SK-N-SH (cell line): ENCODE measurements at regions of chr2 and their contacts with region 1.

Region 1: DNA sequence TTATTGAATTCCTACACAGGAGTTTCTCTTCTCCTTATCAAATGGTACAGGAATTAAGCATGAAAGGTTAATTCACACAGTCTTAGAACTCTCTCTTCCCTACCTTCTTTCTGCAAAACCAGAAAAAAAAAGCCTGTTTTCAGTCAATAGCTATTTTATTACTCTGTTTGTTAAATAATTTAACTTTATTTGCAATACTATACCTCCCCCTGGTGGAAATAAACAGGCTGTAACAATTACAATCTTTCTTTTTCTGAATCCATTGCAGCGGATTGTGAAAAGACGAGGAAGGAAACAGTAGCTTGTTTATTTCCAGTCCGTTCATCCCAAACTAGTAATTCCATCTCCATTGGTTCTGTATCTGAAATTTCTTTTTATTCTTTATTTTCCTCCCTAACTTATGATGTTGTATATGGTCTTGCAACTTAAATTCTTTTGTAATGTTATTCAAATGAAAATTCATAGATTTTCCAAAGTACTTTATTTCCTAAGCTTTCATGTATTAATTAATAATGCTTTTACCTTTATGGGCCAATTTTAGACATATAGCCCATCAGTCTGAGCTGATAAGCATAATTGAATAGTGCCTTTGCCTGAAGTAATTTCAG is 165.2 kb downstream of the SH3BP4 start:
- DNase-seq: peak; percentile 51
- H3K4me3 ChIP-seq: no peak overlapping the region; a peak in 1 of 4 replicates
- H3K27ac ChIP-seq: no peak overlapping the region
- H3K4me1 ChIP-seq: no peaks in the 10 kb centered on the region
- H3K27me3 ChIP-seq: no peaks in the 10 kb centered on the region
- CTCF ChIP-seq: peak; percentile 83
- EP300 ChIP-seq: no peak
- RAD21 ChIP-seq: peak; percentile 87

Region 2: DNA sequence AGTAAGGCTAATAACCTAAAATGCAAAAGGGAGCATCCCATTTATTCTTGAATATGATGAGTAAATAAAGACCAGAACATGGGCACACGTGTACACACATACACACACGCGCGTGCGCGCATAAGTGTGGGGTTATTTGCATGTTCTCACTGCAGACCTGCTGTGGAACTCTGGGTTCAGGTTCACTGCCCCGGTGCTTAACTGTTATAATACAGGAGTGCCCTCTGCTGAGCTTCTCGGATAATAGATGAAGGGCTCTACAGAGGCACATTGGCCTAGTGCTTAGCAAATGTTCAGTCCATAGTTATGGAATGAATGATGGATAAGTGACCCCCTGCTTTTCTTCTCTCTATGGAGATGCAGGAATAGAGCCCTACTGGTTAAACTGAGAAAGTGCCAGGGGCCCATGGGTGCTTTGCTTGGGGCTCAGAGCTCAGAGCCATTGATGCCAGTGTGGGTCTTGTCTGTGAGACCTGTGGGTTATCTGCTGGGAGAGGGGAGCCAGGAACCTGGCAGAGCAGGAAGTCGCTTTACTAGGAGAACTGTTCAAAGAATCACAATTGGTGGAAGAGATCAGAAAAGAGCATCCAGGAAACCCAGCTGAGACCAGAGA is 616.5 kb before region 1 on chr2:
- CTCF ChIA-PET with region 1: interaction called, 14 read pairs
- POLR2A ChIA-PET with region 1: no interaction called
- DNase-seq: peak; percentile 61
- H3K4me3 ChIP-seq: no peak overlapping the region
- H3K27ac ChIP-seq: no peak overlapping the region
- H3K4me1 ChIP-seq: peaks cover 6 to 8% of the 10 kb centered on the region in 2 experiments; a peak in 2 of 4 replicates
- H3K27me3 ChIP-seq: no peaks in the 10 kb centered on the region
- CTCF ChIP-seq: peak; percentile 64
- EP300 ChIP-seq: no peak
- RAD21 ChIP-seq: peak; percentile 93

Region 3: GRCh38 chr2:234533626-234534025 is 583.4 kb before region 1 on chr2:
- CTCF ChIA-PET with region 1: interaction called, 10 read pairs
- POLR2A ChIA-PET with region 1: no interaction called
- DNase-seq: peak; percentile 63
- H3K4me3 ChIP-seq: no peak overlapping the region
- H3K27ac ChIP-seq: no peak overlapping the region; a peak in 1 of 4 replicates
- H3K4me1 ChIP-seq: peaks cover 0 to 36% of the 10 kb centered on the region in 2 experiments; a peak in 1 of 4 replicates
- H3K27me3 ChIP-seq: no peaks in the 10 kb centered on the region
- CTCF ChIP-seq: no peak
- EP300 ChIP-seq: no peak
- RAD21 ChIP-seq: no peak

Region 4: DNA sequence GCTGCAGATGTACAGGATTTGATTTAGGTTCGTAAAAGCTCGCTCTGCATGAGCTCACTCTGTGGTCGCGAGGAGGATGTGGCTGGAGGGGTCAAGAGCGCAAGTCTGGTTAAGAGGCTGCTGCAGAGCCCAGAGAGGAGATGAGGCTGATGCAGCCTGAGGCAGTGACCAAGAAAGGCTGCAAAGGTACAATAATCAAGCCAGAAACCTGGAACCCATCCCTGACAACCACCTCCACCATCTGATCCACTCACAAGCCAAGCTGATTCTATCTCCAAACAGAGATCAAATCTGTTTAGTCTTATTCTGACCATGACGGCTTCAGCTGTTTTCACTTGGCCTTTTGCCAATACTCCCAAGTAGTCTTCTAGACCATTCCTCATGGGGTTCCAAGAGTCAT is 561.3 kb before region 1 on chr2:
- CTCF ChIA-PET with region 1: interaction called, 262 read pairs
- POLR2A ChIA-PET with region 1: no interaction called
- DNase-seq: peak; percentile 33
- H3K4me3 ChIP-seq: no peak overlapping the region
- H3K27ac ChIP-seq: no peak overlapping the region
- H3K4me1 ChIP-seq: peaks cover 0 to 6% of the 10 kb centered on the region in 2 experiments; a peak in 1 of 4 replicates
- H3K27me3 ChIP-seq: no peaks in the 10 kb centered on the region
- CTCF ChIP-seq: no peak
- EP300 ChIP-seq: no peak
- RAD21 ChIP-seq: no peak

Region 5: GRCh38 chr2:234564699-234565098 is 552.3 kb before region 1 on chr2:
- CTCF ChIA-PET with region 1: interaction called, 16 read pairs
- POLR2A ChIA-PET with region 1: no interaction called
- DNase-seq: peak; percentile 55
- H3K4me3 ChIP-seq: no peak overlapping the region
- H3K27ac ChIP-seq: peak overlapping the region in 1 of 2 experiments; percentile 86; a peak in 2 of 4 replicates
- H3K4me1 ChIP-seq: peaks cover 0 to 9% of the 10 kb centered on the region in 2 experiments; a peak in 3 of 4 replicates
- H3K27me3 ChIP-seq: no peaks in the 10 kb centered on the region
- CTCF ChIP-seq: peak; percentile 48
- EP300 ChIP-seq: no peak
- RAD21 ChIP-seq: peak; percentile 75

Region 6: DNA sequence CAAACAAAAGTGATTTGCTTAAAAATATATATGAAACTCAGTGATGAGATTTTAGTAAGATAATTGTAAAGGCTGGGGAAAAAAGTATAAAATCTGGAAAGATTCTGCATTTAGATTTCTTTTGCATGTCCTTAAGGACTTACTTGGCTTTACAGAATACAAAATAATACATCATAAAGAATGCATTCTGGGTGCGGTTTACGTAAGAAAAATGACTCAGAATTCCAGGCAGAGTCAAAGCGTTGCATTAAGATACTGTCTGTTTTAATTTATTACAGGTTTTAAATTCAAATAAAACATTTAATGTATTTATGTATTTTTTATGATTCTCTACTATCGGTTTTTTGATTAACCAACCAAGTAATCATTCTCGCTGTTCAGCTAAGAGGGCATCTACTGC is 12.9 kb after region 1 on chr2:
- CTCF ChIA-PET with region 1: interaction called, 17 read pairs
- POLR2A ChIA-PET with region 1: no interaction called
- DNase-seq: no peak
- H3K4me3 ChIP-seq: no peak overlapping the region
- H3K27ac ChIP-seq: no peak overlapping the region
- H3K4me1 ChIP-seq: no peaks in the 10 kb centered on the region
- H3K27me3 ChIP-seq: no peaks in the 10 kb centered on the region; the same call in 1 of the 2 replicates
- CTCF ChIP-seq: no peak
- EP300 ChIP-seq: no peak
- RAD21 ChIP-seq: no peak

Region 7: GRCh38 chr2:235183786-235184185 is 66.8 kb after region 1 on chr2:
- CTCF ChIA-PET with region 1: no interaction called
- POLR2A ChIA-PET with region 1: no interaction called
- DNase-seq: no peak
- H3K4me3 ChIP-seq: no peak overlapping the region
- H3K27ac ChIP-seq: no peak overlapping the region
- H3K4me1 ChIP-seq: no peaks in the 10 kb centered on the region
- H3K27me3 ChIP-seq: peaks cover 5% of the 10 kb centered on the region; the same call in 1 of the 2 replicates
- CTCF ChIP-seq: no peak
- EP300 ChIP-seq: no peak
- RAD21 ChIP-seq: no peak

Region 8: GRCh38 chr2:235206980-235207579 is 90.1 kb after region 1 on chr2:
- CTCF ChIA-PET with region 1: no interaction called
- POLR2A ChIA-PET with region 1: no interaction called
- DNase-seq: no peak
- H3K4me3 ChIP-seq: no peak overlapping the region
- H3K27ac ChIP-seq: no peak overlapping the region
- H3K4me1 ChIP-seq: peaks cover 0 to 2% of the 10 kb centered on the region in 2 experiments; a peak in 1 of 4 replicates
- H3K27me3 ChIP-seq: no peaks in the 10 kb centered on the region
- CTCF ChIP-seq: no peak
- EP300 ChIP-seq: no peak
- RAD21 ChIP-seq: no peak

Region 9: DNA sequence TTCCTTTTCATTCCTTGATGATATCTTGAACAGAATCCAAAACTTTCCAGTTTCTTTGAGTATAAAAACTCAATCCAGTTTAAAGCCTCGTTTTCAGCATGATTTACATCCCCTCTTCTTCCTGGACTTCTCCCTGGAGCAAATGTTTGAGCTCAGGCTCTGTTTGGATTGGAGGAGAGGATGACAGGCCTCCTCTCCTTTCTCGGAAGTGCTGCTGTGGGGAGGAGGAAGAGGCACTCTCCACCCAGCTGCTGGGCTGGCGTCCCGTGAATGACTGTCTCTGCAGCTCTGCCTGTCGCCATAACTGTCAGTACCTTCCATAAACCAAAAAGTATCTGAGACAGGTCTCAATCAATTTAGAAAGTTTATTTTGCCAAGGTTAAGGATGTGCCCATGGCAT is 138.7 kb after region 1 on chr2:
- CTCF ChIA-PET with region 1: no interaction called
- POLR2A ChIA-PET with region 1: no interaction called
- DNase-seq: no peak
- H3K4me3 ChIP-seq: no peak overlapping the region
- H3K27ac ChIP-seq: no peak overlapping the region
- H3K4me1 ChIP-seq: no peaks in the 10 kb centered on the region
- H3K27me3 ChIP-seq: no peaks in the 10 kb centered on the region
- CTCF ChIP-seq: no peak
- EP300 ChIP-seq: no peak
- RAD21 ChIP-seq: no peak